ENCODE measurements at regions of chr19 and their contacts with region 1.

Region 1: GRCh38 chr19:43229315-43229714 is 23.9 kb upstream of the PSG4 start:
- DNase-seq: peak; percentile 56
- ATAC-seq: peak; percentile 98
- H3K4me3 ChIP-seq: no peak overlapping the region
- H3K27ac ChIP-seq: no peak overlapping the region
- H3K4me1 ChIP-seq: peaks cover 5 to 7% of the 10 kb centered on the region in 2 experiments; a peak in 1 of 4 replicates
- H3K27me3 ChIP-seq: no peaks in the 10 kb centered on the region
- CTCF ChIP-seq: peak; percentile 67 to 87 (median 85)
- POLR2A ChIP-seq: no peak
- RAD21 ChIP-seq: peak; percentile 92

Region 2: GRCh38 chr19:43316592-43317319 is 87.4 kb after region 1 on chr19:
- CTCF ChIA-PET with region 1: interaction called, 3 read pairs
- POLR2A ChIA-PET with region 1: no interaction called
- RAD21 ChIA-PET with region 1: no interaction called
- intact Hi-C with region 1: loop called (anchors 1 kb)
- DNase-seq: peak; percentile 73
- ATAC-seq: peak; percentile 99
- H3K4me3 ChIP-seq: peak overlapping the region; percentile 14 to 44; a peak in 3 of 4 replicates
- H3K27ac ChIP-seq: no peak overlapping the region
- H3K4me1 ChIP-seq: peaks cover 0 to 11% of the 10 kb centered on the region in 2 experiments; a peak in 2 of 4 replicates
- H3K27me3 ChIP-seq: no peaks in the 10 kb centered on the region
- CTCF ChIP-seq: peak; percentile 77 to 83 (median 82); a peak in 5 of 6 replicates
- POLR2A ChIP-seq: no peak
- RAD21 ChIP-seq: peak; percentile 86

Region 3: DNA sequence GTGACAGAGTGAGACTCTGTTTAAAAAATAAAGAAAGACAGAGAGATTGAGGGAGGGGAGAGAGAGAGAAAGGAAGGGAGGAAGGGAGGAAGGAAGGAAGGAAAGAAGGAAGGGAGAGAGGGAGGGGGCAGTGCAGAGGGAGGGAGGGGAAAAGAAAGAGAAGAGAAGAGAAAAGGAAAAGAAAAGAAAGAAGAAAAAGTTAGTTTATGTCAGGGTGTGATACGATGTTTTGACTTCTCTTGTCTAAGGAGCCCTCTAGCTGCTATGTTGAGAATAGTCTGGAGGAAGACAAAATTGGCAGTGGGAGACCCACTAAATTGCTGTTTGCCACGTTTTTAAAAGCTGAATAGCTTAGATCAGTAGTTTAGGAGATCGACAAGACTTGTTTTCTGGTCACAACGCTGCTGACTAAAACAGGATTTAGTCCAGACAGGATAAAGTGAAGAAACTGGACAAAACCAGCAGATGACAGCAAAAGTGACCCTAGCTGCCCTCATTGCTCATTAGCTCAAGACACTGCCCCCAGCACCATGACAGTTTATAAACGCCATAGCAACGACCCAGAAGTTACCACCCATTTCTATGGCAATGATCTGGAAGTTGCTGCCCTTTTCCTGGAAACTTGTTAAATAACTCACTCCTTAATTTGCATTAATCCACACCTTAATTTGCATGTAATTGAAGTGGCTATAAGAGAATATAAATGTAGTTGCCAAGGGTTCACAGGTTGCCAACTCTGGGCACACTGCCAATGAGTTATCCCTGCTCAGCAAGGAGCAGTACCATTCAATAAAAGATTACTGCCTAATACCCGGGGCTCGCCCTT is 196.5 kb after region 1 on chr19:
- CTCF ChIA-PET with region 1: interaction called, 3 read pairs
- POLR2A ChIA-PET with region 1: no interaction called
- RAD21 ChIA-PET with region 1: no interaction called
- intact Hi-C with region 1: loop called (anchors 5 kb)
- DNase-seq: peak; percentile 18
- ATAC-seq: peak; percentile 86
- H3K4me3 ChIP-seq: 0 out of 4 replicates have a peak overlapping the region, but pooled peaks of 1 of the 2 experiments have one; percentile 9
- H3K27ac ChIP-seq: no peak overlapping the region
- H3K4me1 ChIP-seq: peaks cover 7 to 17% of the 10 kb centered on the region in 2 experiments
- H3K27me3 ChIP-seq: no peaks in the 10 kb centered on the region
- CTCF ChIP-seq: peak; percentile 30 to 69 (median 57); a peak in 5 of 6 replicates
- POLR2A ChIP-seq: no peak
- RAD21 ChIP-seq: peak; percentile 57; the same call in 1 of the 2 replicates